IMR-90 (cell line): ENCODE measurements at regions of chr2 and their contacts with region 1.

Region 1: GRCh38 chr2:73020657-73021370 is 50.7 kb downstream of the SFXN5 start:
- DNase-seq: peak; percentile 85
- ATAC-seq: peak; percentile 94
- H3K4me3 ChIP-seq: no peak overlapping the region
- H3K27ac ChIP-seq: no peak overlapping the region
- H3K4me1 ChIP-seq: peaks cover 15% of the 10 kb centered on the region
- H3K27me3 ChIP-seq: no peaks in the 10 kb centered on the region
- CTCF ChIP-seq: no peak
- POLR2A ChIP-seq: no peak
- RAD21 ChIP-seq: no peak

Region 2: GRCh38 chr2:72678024-72678423 is 342.8 kb before region 1 on chr2:
- CTCF ChIA-PET with region 1: no interaction called
- POLR2A ChIA-PET with region 1: no interaction called
- dilution Hi-C with region 1: no loop called
- in situ Hi-C with region 1: no loop called
- intact Hi-C with region 1: no loop called
- DNase-seq: no peak
- ATAC-seq: no peak; the same call in 1 of the 2 replicates
- H3K4me3 ChIP-seq: no peak overlapping the region
- H3K27ac ChIP-seq: no peak overlapping the region
- H3K4me1 ChIP-seq: peaks cover 4% of the 10 kb centered on the region
- H3K27me3 ChIP-seq: no peaks in the 10 kb centered on the region
- CTCF ChIP-seq: no peak
- POLR2A ChIP-seq: no peak
- RAD21 ChIP-seq: no peak

Region 3: DNA sequence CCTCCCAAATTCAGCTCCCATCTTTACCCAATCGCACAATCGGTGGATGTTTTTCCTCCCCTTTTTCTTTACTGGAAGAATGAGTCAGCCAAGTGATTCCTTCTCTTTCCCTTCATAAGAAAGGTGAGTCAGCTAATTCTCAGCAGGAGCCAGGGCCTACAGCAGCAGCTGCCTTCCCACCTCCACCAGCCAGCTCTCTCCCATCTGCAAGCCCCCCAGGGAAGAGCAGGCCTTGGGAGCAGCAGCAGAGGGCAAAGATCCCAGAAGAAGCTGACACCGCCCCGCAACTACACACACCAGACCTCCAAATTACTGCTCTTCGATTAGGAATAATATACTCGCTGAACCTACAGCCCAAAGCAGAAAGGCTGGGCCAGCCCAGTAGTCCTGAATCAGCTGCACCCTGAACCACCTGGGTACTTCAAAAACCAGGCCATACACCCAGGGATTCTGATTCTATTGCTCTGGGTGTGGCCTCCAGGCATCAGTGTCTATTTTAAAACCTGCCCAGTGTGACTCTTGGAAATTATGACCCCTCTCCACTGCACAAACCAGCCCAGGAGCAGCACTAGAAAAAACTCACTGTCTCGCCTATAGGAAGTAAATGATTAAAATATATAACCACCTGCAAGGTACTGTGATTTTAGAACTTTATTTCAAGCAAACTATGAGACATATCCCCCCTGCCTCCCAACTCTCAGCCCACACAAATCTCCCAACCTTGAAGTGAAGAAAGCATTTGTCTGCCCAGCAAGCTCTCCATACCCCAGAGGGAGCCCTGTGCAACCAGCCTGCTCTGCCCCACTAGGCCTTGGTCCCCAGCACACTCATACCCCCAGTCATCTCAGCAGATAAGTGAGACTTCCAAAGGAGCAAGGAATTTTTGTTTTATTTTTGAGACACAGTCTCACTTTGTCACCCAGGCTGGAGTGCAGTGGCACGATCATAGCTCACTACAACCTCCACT is 43.4 kb after region 1 on chr2:
- CTCF ChIA-PET with region 1: no interaction called
- POLR2A ChIA-PET with region 1: no interaction called
- dilution Hi-C with region 1: no loop called
- in situ Hi-C with region 1: no loop called
- intact Hi-C with region 1: loop called (anchors 5 kb)
- DNase-seq: peak; percentile 86
- ATAC-seq: peak; percentile 92
- H3K4me3 ChIP-seq: no peak overlapping the region
- H3K27ac ChIP-seq: peak overlapping the region; percentile 76
- H3K4me1 ChIP-seq: peaks cover 17% of the 10 kb centered on the region
- H3K27me3 ChIP-seq: no peaks in the 10 kb centered on the region
- CTCF ChIP-seq: no peak
- POLR2A ChIP-seq: no peak
- RAD21 ChIP-seq: no peak

Region 4: DNA sequence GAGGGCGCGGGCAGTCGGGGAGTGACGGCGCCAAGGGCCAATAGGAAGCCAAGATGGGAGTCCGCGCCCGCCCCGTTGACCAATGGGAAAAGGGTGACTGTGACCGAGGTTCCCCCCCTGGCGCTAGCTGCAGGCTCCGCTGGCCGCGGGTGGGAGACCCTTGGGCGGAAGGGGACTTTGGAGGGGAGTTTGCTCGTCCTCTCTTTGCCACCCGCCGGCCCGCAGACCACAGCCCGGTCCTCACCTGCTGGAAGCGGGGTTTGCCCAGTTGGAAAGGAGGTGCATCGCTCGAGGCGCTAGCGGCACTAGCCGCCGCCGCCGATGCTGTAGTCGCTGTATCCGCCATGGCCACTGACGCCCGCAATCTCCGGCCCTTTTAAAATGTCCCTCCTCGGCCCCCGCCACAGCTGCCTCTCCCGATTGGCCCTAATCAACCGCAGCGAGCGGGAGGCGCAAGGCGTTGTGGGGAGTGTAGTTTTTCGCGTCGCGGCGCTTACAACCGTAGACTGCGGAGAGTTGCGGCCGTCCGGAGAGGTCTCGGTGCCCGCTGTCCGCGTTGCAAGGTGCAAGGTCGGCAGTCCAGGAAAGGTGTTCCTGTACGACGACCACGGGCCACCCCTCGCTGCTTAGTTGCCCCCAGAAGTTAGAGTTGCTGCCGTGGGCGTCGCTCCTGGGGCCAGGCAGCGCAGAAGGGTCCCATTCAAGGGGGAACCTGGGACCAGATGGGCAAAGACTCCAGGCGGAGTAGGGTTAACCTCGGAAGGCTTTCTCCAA is 50.7 kb after region 1 on chr2 and contains the start of gene SFXN5:
- CTCF ChIA-PET with region 1: no interaction called
- POLR2A ChIA-PET with region 1: no interaction called
- dilution Hi-C with region 1: no loop called
- in situ Hi-C with region 1: no loop called
- intact Hi-C with region 1: loop called (anchors 2 kb)
- DNase-seq: peak; percentile 93
- ATAC-seq: peak; percentile 92
- H3K4me3 ChIP-seq: peak within 1 kb of the TSS; percentile 82
- H3K27ac ChIP-seq: peak within 1 kb of the TSS; percentile 86
- H3K4me1 ChIP-seq: peaks cover 12% of the 10 kb centered on the region
- H3K27me3 ChIP-seq: no peaks in the 10 kb centered on the region
- CTCF ChIP-seq: peak; percentile 36
- POLR2A ChIP-seq: peak; percentile 54; the same call in 1 of the 2 replicates
- RAD21 ChIP-seq: no peak
- total RNA-seq, gene SFXN5: 8.3 and 8.6 TPM in 2 replicates